Dendritic cell treated with granulocyte-macrophage colony-stimulating factor and Interleukin-4, amounts not matched to agents 40 ng/mL and 50 ng/mL, for 4 days (primary cell): ENCODE measurements at regions of chr16 and their contacts with region 1.

Region 1: DNA sequence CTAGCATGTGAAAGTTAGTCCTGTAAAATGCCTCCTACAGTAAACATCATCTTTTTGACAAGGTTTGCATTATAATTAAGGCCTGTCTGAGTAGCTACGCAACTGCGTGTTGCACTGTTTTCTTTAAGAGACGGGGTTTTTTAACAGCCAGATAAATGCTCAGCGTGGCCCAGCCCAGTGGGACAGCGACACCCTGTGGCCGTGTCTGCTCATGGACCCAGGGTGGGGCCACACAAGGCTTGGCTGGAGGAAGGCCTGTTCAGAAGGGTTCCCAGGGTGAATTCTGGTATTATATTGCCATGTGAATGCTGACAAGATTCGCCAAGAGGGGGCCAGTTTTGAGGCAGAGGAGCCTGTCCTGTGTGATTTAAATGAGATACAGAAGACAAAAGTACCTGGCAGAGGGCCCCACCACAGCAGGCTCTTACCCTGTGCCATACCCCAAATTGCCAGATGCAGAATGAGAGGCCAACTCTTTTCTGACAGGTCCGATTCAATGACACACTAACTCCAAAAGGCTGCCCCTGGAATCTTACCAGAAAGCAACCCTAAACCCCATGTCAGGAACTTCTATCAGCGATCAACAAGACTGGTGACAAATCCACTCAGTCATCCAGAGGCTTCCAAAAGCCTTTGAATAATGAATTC is 65.9 kb upstream of the IRX6 start:
- H3K4me3 Mint-ChIP-seq: no peak overlapping the region
- H3K27ac Mint-ChIP-seq: no peak overlapping the region
- H3K4me1 Mint-ChIP-seq: no peaks in the 10 kb centered on the region
- H3K27me3 Mint-ChIP-seq: peaks cover 12% of the 10 kb centered on the region

Region 2: DNA sequence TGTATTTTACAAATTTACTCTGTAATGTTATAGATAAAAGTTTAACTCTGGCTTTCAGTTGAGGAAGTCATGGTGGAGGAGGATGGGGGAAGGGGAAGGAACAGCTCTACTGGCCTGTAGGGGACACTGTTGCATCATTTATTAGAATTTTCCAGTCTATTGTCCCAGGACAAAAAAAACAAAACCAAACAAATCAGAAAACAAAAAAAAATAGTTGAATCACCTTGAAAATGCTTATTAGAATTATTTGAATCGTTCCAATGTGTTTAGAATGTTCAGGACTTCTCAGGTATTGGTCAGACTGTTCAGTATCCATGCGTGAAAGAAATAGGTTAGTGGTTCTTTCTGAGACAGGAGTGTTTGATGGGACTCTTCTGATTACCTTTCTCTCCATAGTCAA is 1312.1 kb before region 1 on chr16:
- intact Hi-C with region 1: loop called (anchors 2 kb)
- H3K4me3 Mint-ChIP-seq: no peak overlapping the region
- H3K27ac Mint-ChIP-seq: no peak overlapping the region
- H3K4me1 Mint-ChIP-seq: peaks cover 16% of the 10 kb centered on the region
- H3K27me3 Mint-ChIP-seq: no peaks in the 10 kb centered on the region

Region 3: GRCh38 chr16:55179852-55180585 is 78.1 kb before region 1 on chr16:
- intact Hi-C with region 1: no loop called
- H3K4me3 Mint-ChIP-seq: no peak overlapping the region
- H3K27ac Mint-ChIP-seq: no peak overlapping the region
- H3K4me1 Mint-ChIP-seq: no peaks in the 10 kb centered on the region
- H3K27me3 Mint-ChIP-seq: no peaks in the 10 kb centered on the region